A673 (cell line): ENCODE measurements at regions of chr6 and their contacts with region 1.

Region 1: GRCh38 chr6:24283043-24283985 is 74.5 kb downstream of the DCDC2 start:
- DNase-seq: peak; percentile 97
- H3K4me3 ChIP-seq: peak overlapping the region; percentile 16
- H3K27ac ChIP-seq: peak overlapping the region; percentile 85
- H3K4me1 ChIP-seq: peaks cover 59% of the 10 kb centered on the region
- H3K27me3 ChIP-seq: no peaks in the 10 kb centered on the region
- CTCF ChIP-seq: peak; percentile 69

Region 2: DNA sequence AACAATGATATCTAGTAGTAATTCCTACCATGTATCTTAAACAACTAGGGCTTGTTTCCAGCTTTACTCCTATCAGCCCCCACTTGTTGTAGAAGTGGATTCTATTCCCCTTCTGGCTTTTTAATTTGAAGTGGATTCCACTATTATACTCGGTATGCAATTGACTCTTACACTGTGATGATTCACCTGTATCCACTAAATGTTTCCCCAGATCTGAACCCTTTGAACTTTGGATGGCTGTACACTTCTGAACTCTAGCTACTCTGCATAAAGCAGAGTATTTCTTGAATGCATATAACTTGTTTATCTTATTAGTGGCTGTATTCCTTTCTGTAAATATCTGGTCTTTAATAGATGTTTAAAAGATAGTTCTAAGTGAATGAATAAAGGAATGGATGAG is 695.7 kb before region 1 on chr6:
- CTCF ChIA-PET with region 1: no interaction called
- POLR2A ChIA-PET with region 1: no interaction called
- intact Hi-C with region 1: no loop called
- DNase-seq: no peak
- H3K4me3 ChIP-seq: no peak overlapping the region
- H3K27ac ChIP-seq: no peak overlapping the region
- H3K4me1 ChIP-seq: no peaks in the 10 kb centered on the region
- H3K27me3 ChIP-seq: no peaks in the 10 kb centered on the region
- CTCF ChIP-seq: no peak

Region 3: DNA sequence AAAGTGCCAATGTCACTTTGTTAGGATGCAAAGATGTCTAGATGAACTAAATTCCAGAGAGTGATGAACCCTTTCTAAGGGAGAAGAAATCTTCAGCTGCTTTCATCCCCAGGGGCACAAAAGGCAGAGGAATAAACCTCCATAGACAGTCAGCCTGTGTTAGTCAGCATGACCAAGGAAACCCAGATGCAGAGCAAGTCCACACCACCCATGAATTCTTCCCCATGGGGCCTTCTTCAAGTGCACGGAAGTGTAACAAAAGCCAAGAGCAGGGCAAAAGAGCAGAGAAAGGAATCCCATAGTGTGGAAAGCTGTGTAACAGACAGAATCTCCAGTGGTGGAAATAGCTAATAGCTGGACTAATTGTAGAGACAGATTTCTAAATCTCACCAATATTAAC is 24.6 kb after region 1 on chr6:
- CTCF ChIA-PET with region 1: interaction called, 10 read pairs
- POLR2A ChIA-PET with region 1: no interaction called
- intact Hi-C with region 1: no loop called
- DNase-seq: peak; percentile 84
- H3K4me3 ChIP-seq: no peak overlapping the region
- H3K27ac ChIP-seq: peak overlapping the region; percentile 64
- H3K4me1 ChIP-seq: peaks cover 24% of the 10 kb centered on the region
- H3K27me3 ChIP-seq: no peaks in the 10 kb centered on the region
- CTCF ChIP-seq: no peak

Region 4: GRCh38 chr6:24340998-24341938 is 58.0 kb after region 1 on chr6:
- CTCF ChIA-PET with region 1: no interaction called
- POLR2A ChIA-PET with region 1: interaction called, 11 read pairs
- intact Hi-C with region 1: no loop called
- DNase-seq: no peak
- H3K4me3 ChIP-seq: no peak overlapping the region
- H3K27ac ChIP-seq: no peak overlapping the region
- H3K4me1 ChIP-seq: peaks cover 7% of the 10 kb centered on the region
- H3K27me3 ChIP-seq: no peaks in the 10 kb centered on the region
- CTCF ChIP-seq: no peak

Region 5: GRCh38 chr6:24359640-24360454 is 76.5 kb after region 1 on chr6:
- CTCF ChIA-PET with region 1: interaction called, 22 read pairs
- POLR2A ChIA-PET with region 1: interaction called, 3 read pairs
- intact Hi-C with region 1: loop called (anchors 1 kb)
- DNase-seq: peak; percentile 98
- H3K4me3 ChIP-seq: peak overlapping the region; percentile 41
- H3K27ac ChIP-seq: peak overlapping the region; percentile 81
- H3K4me1 ChIP-seq: peaks cover 25% of the 10 kb centered on the region
- H3K27me3 ChIP-seq: no peaks in the 10 kb centered on the region
- CTCF ChIP-seq: peak; percentile 95

Region 6: DNA sequence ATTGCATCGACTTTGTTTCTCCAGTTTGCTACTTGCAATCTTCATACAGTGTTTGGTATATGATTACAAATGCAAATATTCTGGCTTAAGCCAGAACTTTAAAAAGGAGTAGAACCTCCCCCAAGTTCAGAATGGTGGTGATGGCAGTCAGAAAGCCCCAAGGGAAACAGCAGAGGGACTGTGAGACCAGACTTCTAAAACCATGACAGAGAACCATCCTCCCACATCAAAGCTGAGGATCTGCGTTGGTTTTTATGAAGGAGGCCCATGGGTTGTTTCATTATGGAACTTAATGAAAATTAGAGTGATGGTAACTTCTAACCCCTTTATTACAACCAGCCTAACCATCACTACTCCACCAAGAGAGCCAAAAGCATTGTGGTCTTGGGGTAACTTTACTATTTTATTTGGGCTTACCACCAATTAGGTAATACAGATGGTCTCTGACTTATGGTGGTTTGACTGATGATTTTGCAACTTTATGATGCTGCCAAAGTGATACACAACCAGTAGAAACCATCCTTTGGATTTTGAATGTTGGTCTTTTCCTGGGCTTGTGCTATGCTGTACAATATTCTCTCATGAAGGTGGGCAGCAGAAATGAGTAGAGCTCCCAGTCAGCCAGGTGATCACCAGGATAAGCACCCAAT is 108.6 kb after region 1 on chr6:
- CTCF ChIA-PET with region 1: interaction called, 21 read pairs
- POLR2A ChIA-PET with region 1: no interaction called
- intact Hi-C with region 1: no loop called
- DNase-seq: no peak
- H3K4me3 ChIP-seq: no peak overlapping the region
- H3K27ac ChIP-seq: no peak overlapping the region
- H3K4me1 ChIP-seq: peaks cover 14% of the 10 kb centered on the region
- H3K27me3 ChIP-seq: no peaks in the 10 kb centered on the region
- CTCF ChIP-seq: no peak

Region 7: DNA sequence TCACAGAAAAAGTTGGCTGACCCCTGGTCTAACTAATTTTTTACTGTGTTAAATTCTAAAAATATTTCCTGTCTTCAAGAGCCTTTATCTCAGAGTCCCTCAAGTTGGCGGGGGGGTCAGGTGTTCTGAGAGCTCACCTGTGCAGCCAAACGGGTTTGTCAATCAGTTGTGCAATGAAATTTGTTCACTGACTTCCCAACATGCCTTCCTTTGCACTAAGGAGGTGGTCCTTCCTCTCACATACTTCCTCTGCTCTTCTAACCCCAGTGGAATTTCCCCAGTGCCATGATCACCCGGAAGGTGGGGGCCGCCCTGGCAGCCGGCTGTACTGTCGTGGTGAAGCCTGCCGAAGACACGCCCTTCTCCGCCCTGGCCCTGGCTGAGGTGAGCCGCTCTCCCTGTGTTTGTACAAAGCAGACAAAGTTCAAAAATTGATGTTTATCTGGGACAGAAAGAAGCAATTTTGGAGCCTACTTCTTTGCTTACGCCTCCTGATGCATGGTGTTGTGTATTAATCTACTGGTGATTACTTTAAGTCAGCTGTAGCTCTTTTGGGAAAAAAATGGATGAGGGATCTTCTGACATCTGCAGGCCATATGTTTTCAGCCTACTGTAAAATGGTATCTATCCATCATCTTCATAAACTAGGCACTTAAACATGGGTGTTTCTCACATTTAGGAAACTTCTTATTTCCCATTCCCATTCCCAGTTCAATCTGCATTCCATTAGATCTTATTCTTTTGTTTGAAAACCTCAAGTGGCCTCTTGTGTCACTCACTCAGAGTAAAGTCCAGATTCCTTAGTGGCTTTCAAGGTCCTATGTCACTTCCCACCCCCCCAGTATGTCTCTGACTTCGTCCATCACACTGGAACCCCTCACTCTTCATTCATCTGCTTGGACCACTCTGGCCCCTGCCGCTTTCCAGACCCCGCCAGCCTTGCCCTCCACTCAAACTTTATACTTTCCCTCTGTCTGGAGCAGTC is 221.6 kb after region 1 on chr6:
- CTCF ChIA-PET with region 1: no interaction called
- POLR2A ChIA-PET with region 1: no interaction called
- intact Hi-C with region 1: no loop called
- DNase-seq: no peak
- H3K4me3 ChIP-seq: no peak overlapping the region
- H3K27ac ChIP-seq: no peak overlapping the region
- H3K4me1 ChIP-seq: no peaks in the 10 kb centered on the region
- H3K27me3 ChIP-seq: no peaks in the 10 kb centered on the region
- CTCF ChIP-seq: no peak

Region 8: DNA sequence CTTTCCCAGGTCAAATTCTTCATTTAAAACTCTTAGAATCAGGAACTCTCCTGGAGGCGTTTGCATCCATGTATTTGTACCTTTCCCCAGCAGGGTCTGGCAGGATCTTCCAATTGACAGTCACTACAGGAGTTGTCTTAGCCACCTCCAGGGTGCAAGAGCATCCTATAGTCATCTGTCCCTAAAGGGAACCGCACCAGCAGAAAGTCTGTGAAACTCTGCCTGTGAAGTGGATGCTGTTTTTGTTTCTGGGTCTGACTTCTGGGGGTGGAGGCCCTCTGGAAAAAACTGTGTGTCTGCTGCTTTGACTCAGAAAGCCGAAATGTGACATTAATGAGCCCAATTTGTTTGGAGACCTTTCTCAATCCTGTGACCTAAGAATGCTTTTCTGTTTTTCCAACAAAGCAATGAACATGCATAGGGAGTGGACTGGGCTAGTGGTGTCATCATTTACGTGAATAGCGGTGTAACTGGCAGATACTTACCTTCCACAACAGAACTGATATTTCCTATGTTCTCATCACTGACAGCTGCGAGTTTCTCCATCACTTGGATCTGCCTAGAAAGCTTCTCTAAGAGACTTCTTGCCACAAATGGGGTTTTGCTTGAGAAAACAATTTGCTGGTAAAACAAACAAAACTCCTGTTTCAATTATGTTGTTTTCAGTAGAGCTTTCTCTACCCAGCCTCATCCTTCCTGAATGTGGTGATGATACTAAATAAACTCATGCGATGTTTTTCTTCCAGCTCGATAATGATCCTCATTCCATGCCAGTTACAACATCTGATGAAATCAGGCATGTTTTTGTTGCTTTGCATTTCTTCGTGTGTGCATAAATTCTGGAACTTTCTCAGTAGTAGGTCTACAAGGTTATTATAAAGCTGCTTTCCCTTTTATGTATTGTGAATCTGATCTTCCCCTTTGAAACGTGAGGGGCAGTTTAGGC is 548.7 kb after region 1 on chr6:
- CTCF ChIA-PET with region 1: no interaction called
- POLR2A ChIA-PET with region 1: no interaction called
- intact Hi-C with region 1: no loop called
- DNase-seq: no peak
- H3K4me3 ChIP-seq: no peak overlapping the region
- H3K27ac ChIP-seq: no peak overlapping the region
- H3K4me1 ChIP-seq: peaks cover 3% of the 10 kb centered on the region
- H3K27me3 ChIP-seq: no peaks in the 10 kb centered on the region
- CTCF ChIP-seq: no peak

Region 9: GRCh38 chr6:25006565-25007001 is 723.3 kb after region 1 on chr6:
- CTCF ChIA-PET with region 1: no interaction called
- POLR2A ChIA-PET with region 1: no interaction called
- intact Hi-C with region 1: no loop called
- DNase-seq: no peak
- H3K4me3 ChIP-seq: no peak overlapping the region
- H3K27ac ChIP-seq: no peak overlapping the region
- H3K4me1 ChIP-seq: no peaks in the 10 kb centered on the region
- H3K27me3 ChIP-seq: no peaks in the 10 kb centered on the region
- CTCF ChIP-seq: no peak